Activated B cell treated with CpG ODN at 0.5 μM for 24 hours (primary cell): ENCODE measurements at regions of chr10 and their contacts with region 1.

Region 1: GRCh38 chr10:68208424-68209042 is 23.4 kb downstream of the ATOH7 start:
- DNase-seq: no peak
- ATAC-seq: no peak
- H3K4me3 Mint-ChIP-seq: no peak overlapping the region
- H3K27ac Mint-ChIP-seq: no peak overlapping the region
- H3K4me1 Mint-ChIP-seq: no peaks in the 10 kb centered on the region
- H3K27me3 Mint-ChIP-seq: peaks cover 9% of the 10 kb centered on the region
- CTCF ChIP-seq: no peak

Region 2: DNA sequence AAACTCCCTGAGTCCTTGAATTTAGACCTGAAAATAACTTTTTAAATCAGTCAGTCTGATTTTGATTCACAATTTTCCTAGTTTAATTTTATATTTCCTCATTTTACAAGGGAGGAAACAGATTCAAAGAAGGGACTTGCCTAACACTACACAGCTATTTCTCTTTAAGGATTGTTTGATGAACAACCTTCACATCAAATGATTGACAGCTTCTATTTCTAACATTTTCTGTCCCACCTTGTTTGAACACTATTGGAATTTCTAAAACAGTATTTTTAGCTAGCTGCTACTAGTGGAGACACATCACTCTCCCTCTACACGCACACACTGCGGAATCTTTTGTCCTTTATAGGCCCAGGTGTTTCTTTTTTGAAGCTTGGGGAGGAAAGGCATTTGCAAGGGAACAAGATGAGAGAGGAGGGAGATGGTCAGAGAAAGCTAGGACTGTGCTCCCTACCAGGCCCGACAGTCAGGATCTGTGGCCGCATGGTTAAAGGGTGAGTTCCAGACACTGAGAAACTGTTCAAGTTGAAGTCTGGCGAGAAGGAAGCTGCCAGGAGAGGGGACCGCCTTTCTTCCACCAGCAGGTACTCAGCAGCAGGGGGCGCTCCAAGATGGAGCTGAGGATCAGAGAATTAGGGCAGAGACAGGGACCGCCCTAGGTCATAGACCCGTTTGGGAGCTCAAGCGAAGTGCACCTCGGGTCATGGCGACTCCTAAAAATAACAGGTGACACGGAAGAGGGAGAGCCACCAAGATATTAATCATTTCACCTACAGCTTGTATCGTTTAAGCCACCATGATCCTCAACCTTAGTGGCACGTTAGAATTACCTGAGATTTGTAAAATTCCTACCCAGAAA is 420.3 kb before region 1 on chr10:
- CTCF ChIA-PET with region 1: interaction called, 5 read pairs
- POLR2A ChIA-PET with region 1: interaction called, 4 read pairs
- intact Hi-C with region 1: loop called (anchors 2 kb)
- DNase-seq: peak; percentile 58
- ATAC-seq: peak; percentile 80
- H3K4me3 Mint-ChIP-seq: peak overlapping the region; percentile 52
- H3K27ac Mint-ChIP-seq: no peak overlapping the region
- H3K4me1 Mint-ChIP-seq: peaks cover 23% of the 10 kb centered on the region
- H3K27me3 Mint-ChIP-seq: no peaks in the 10 kb centered on the region
- CTCF ChIP-seq: no peak

Region 3: GRCh38 chr10:68348265-68348741 is 139.8 kb after region 1 on chr10:
- CTCF ChIA-PET with region 1: interaction called, 18 read pairs
- POLR2A ChIA-PET with region 1: no interaction called
- intact Hi-C with region 1: loop called (anchors 1 kb)
- DNase-seq: no peak
- ATAC-seq: peak; percentile 73
- H3K4me3 Mint-ChIP-seq: no peak overlapping the region
- H3K27ac Mint-ChIP-seq: peak overlapping the region; percentile 56
- H3K4me1 Mint-ChIP-seq: peaks cover 2% of the 10 kb centered on the region
- H3K27me3 Mint-ChIP-seq: no peaks in the 10 kb centered on the region
- CTCF ChIP-seq: no peak